Activated T-helper 2 cell treated with anti-CD3 and anti-CD28 coated beads, Interferon-gamma antibody, Interleukin-2, Interleukin-4, amounts not matched to agents 10 μg/mL and 5 μg/mL and 100 μg/mL, durations not matched to agents 14 hours and 24 hours and 36 hours (primary cell): ENCODE measurements at regions of chr10 and their contacts with region 1.

Region 1: GRCh38 chr10:22245567-22245966 is 27.8 kb upstream of the EBLN1 start:
- DNase-seq: no peak
- H3K4me3 Mint-ChIP-seq: no peak overlapping the region
- H3K27ac Mint-ChIP-seq: peak overlapping the region; percentile 59
- H3K4me1 Mint-ChIP-seq: peaks cover 42% of the 10 kb centered on the region
- H3K27me3 Mint-ChIP-seq: peaks cover 3% of the 10 kb centered on the region

Region 2: GRCh38 chr10:21517134-21518031 is 728.2 kb before region 1 on chr10:
- intact Hi-C with region 1: loop called (anchors 5 kb)
- DNase-seq: no peak
- H3K4me3 Mint-ChIP-seq: peak overlapping the region; percentile 65
- H3K27ac Mint-ChIP-seq: no peak overlapping the region
- H3K4me1 Mint-ChIP-seq: peaks cover 39% of the 10 kb centered on the region
- H3K27me3 Mint-ChIP-seq: peaks cover 64% of the 10 kb centered on the region

Region 3: GRCh38 chr10:22054961-22055360 is 190.6 kb before region 1 on chr10:
- intact Hi-C with region 1: no loop called
- DNase-seq: no peak
- H3K4me3 Mint-ChIP-seq: no peak overlapping the region
- H3K27ac Mint-ChIP-seq: no peak overlapping the region
- H3K4me1 Mint-ChIP-seq: no peaks in the 10 kb centered on the region
- H3K27me3 Mint-ChIP-seq: no peaks in the 10 kb centered on the region

Region 4: DNA sequence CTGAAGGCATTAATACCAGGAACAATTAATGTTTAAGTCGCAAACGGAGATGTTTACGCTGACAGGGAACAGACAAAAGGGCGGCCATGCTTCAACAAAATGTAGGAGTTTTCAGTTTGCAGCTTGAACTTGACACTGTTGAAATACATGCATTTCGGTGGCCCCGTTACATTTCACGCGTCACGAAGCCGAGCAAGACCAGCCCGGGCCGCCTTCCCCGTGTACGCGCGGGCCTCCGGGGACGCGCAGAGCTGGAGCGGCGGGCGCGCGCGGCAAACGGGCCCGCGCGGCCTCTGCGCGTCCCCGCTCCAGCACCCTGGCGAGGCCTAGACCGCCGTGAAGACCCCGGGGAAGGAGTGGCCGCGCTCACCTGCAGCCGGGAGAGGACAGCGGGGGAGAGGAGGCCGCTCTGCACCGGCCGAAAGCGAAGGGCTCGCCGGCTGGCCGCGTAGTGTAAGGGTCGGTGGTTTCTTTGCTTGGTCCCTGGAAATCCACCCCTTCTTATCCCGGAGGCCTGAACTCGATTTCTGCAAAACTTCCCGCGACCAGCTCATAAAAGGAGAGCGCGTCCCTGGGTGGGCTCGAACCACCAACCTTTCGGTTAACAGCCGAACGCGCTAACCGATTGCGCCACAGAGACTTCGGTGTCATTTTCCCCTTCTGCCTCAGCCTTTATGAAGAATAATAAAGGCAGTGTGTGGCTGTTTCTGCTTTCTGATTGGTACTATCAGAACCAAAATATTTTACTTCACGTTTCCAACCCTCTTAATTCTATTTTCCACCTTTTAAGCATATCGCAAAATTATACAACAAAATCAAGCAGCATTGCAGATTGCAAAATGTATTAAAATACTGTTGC is 16.4 kb before region 1 on chr10:
- intact Hi-C with region 1: loop called (anchors 1 kb)
- DNase-seq: peak; percentile 82
- H3K4me3 Mint-ChIP-seq: peak overlapping the region; percentile 88
- H3K27ac Mint-ChIP-seq: peak overlapping the region; percentile 82
- H3K4me1 Mint-ChIP-seq: peaks cover 18% of the 10 kb centered on the region
- H3K27me3 Mint-ChIP-seq: peaks cover 8% of the 10 kb centered on the region

Region 5: GRCh38 chr10:22316285-22317120 is 70.9 kb after region 1 on chr10 and contains the start of gene COMMD3:
- intact Hi-C with region 1: loop called (anchors 1 kb)
- DNase-seq: peak; percentile 79
- H3K4me3 Mint-ChIP-seq: peak within 1 kb of the TSS; percentile 88
- H3K27ac Mint-ChIP-seq: peak within 1 kb of the TSS; percentile 88
- H3K4me1 Mint-ChIP-seq: peaks cover 40% of the 10 kb centered on the region
- H3K27me3 Mint-ChIP-seq: peaks cover 1% of the 10 kb centered on the region
- total RNA-seq, gene COMMD3: 92.1 and 105 TPM in 2 replicates

Region 6: DNA sequence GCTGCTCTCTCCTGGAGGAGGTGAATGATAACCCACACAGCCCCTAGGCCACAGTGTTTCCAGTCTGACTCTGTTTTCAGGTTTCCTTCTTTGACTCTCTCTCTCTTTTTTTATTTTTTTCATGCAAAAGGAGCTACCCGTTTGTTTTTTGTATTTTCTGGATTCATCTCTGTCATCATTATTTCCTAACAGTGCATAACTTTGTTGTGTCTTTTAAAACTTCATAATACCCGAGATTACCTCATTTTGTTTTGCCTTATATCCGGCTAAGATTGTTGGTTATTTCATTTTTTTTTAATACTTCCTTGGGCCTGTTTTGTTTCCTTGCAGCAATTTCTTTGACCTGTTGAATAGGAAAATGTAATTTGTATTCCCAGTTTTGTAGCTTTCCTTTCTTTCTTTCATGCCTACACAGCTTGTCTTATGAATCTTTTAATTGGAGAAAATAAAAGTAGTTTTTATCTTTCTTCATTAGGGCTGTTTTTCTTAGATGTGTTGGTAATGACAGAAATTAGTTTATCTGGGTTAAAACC is 172.2 kb after region 1 on chr10:
- intact Hi-C with region 1: loop called (anchors 5 kb)
- DNase-seq: no peak
- H3K4me3 Mint-ChIP-seq: no peak overlapping the region
- H3K27ac Mint-ChIP-seq: no peak overlapping the region
- H3K4me1 Mint-ChIP-seq: peaks cover 1% of the 10 kb centered on the region
- H3K27me3 Mint-ChIP-seq: peaks cover 3% of the 10 kb centered on the region